Astrocyte of the cerebellum (primary cell): ENCODE measurements at regions of chr3 and their contacts with region 1.

Region 1: DNA sequence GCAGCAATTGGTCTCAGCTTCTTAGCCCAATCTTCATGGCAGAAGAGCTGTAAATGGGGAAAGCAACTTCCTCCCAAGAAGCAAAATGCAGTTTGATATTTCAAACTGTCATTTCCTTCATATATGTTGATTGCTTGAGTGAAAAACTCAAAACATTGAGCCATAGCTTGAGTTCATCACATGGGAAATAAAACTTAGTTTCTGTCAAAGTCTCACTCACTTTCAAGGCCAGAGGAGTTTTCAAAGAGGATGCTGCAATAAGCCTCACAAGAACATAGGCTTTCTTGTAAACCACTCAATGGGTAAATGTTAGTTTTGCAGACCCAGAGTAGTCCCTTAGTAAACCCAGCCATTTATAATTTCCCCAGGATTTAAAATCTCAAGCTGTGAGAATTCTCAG is 29.1 kb upstream of the SUCLG2 start:
- DNase-seq: no peak
- H3K4me3 ChIP-seq: no peak overlapping the region
- CTCF ChIP-seq: no peak

Region 2: DNA sequence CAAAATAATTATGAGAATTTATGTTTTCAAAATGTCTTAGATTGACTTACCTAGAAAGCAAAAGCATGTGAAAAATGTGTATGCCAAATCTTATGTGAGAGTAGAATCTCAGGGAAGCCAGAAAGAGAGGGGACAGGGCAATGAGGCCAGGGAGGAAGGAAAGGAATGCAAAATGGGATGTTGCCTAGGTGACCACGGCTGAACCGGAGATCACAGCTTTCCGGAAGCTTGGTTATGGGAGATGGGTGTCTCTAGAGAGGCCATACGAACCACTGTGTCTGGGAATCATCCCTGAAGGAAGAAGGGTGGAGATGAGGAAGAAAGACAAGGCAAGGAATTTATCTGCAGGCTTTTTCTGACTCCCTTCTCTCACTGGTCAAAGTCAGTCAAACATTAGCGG is 105.1 kb before region 1 on chr3:
- in situ Hi-C with region 1: loop called (anchors 5 kb)
- DNase-seq: no peak
- H3K4me3 ChIP-seq: no peak overlapping the region
- CTCF ChIP-seq: no peak